Activated CD8-positive, alpha-beta memory T cell treated with anti-CD3 and anti-CD28 coated beads, Interleukin-2, amount 10 ng/mL, durations not matched to agents 7 days and 5 days (primary cell): ENCODE measurements at regions of chr18 and their contacts with region 1.

Region 1: GRCh38 chr18:63439334-63439733 is 17.1 kb upstream of the VPS4B start:
- DNase-seq: peak; percentile 55
- ATAC-seq: peak; percentile 60
- H3K4me3 Mint-ChIP-seq: no peak overlapping the region
- H3K27ac Mint-ChIP-seq: no peak overlapping the region
- H3K4me1 Mint-ChIP-seq: peaks cover 4% of the 10 kb centered on the region
- H3K27me3 Mint-ChIP-seq: peaks cover 46% of the 10 kb centered on the region

Region 2: DNA sequence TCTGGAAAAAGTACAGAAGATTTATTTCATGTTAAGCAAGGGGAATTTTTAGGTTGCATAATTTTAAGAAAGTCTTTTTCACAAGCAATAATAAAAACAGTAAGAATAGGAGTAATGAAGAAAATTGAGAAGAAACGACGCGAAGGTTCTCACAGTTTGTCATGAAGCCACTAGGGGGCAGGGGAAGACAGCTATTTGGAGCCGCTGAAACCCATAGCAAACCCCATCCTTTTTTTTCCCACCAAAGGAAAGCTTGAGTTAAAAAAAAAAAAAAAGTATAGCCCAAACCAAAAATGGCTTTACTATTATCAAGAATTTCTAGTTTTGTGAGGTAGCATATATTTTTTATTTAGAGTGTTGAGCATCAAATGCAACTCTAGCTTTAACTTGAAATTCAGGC is 423.1 kb before region 1 on chr18:
- CTCF ChIA-PET with region 1: interaction called, 44 read pairs
- DNase-seq: peak; percentile 52
- ATAC-seq: peak; percentile 60
- H3K4me3 Mint-ChIP-seq: no peak overlapping the region
- H3K27ac Mint-ChIP-seq: no peak overlapping the region
- H3K4me1 Mint-ChIP-seq: no peaks in the 10 kb centered on the region
- H3K27me3 Mint-ChIP-seq: peaks cover 61% of the 10 kb centered on the region

Region 3: GRCh38 chr18:63325086-63325686 is 114.1 kb before region 1 on chr18:
- CTCF ChIA-PET with region 1: interaction called, 33 read pairs
- DNase-seq: no peak
- ATAC-seq: no peak
- H3K4me3 Mint-ChIP-seq: no peak overlapping the region
- H3K27ac Mint-ChIP-seq: no peak overlapping the region
- H3K4me1 Mint-ChIP-seq: peaks cover 18% of the 10 kb centered on the region
- H3K27me3 Mint-ChIP-seq: no peaks in the 10 kb centered on the region

Region 4: GRCh38 chr18:63339920-63340484 is 99.3 kb before region 1 on chr18:
- CTCF ChIA-PET with region 1: interaction called, 79 read pairs
- DNase-seq: peak; percentile 51
- ATAC-seq: peak; percentile 39
- H3K4me3 Mint-ChIP-seq: no peak overlapping the region
- H3K27ac Mint-ChIP-seq: peak overlapping the region; percentile 47
- H3K4me1 Mint-ChIP-seq: peaks cover 6% of the 10 kb centered on the region
- H3K27me3 Mint-ChIP-seq: no peaks in the 10 kb centered on the region

Region 5: GRCh38 chr18:63366213-63367052 is 72.9 kb before region 1 on chr18:
- CTCF ChIA-PET with region 1: interaction called, 22 read pairs
- DNase-seq: peak; percentile 86
- ATAC-seq: peak; percentile 60
- H3K4me3 Mint-ChIP-seq: peak overlapping the region; percentile 85
- H3K27ac Mint-ChIP-seq: peak overlapping the region; percentile 77
- H3K4me1 Mint-ChIP-seq: peaks cover 39% of the 10 kb centered on the region
- H3K27me3 Mint-ChIP-seq: no peaks in the 10 kb centered on the region

Region 6: GRCh38 chr18:63422087-63422809 is 17.1 kb before region 1 on chr18 and contains the start of gene VPS4B:
- CTCF ChIA-PET with region 1: interaction called, 19 read pairs
- DNase-seq: peak; percentile 100
- ATAC-seq: peak; percentile 95
- H3K4me3 Mint-ChIP-seq: peak within 1 kb of the TSS; percentile 99
- H3K27ac Mint-ChIP-seq: peak within 1 kb of the TSS; percentile 99
- H3K4me1 Mint-ChIP-seq: peaks cover 30% of the 10 kb centered on the region
- H3K27me3 Mint-ChIP-seq: peaks cover 2% of the 10 kb centered on the region
- total RNA-seq, gene VPS4B: 63.3 to 64.8 TPM

Region 7: DNA sequence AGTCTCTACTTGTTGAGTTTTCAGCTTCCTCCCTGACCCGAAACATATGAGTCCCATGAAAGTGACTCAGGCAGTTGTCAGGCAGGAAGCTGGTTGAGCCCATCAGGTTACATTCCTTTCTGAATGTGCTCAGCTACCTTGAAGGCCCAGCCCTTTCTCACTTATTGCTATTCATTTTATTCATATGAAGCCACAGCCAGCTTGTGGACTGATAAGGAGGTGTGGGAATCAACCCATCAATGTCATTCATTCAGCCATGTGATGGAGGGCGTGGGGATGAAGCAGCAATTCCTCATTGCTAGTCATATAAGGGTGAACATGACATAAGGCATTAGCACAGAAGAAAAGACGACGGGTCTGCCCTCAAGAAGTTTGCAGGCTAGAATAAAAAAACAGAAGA is 11.8 kb before region 1 on chr18:
- CTCF ChIA-PET with region 1: interaction called, 19 read pairs
- DNase-seq: no peak
- ATAC-seq: no peak
- H3K4me3 Mint-ChIP-seq: no peak overlapping the region
- H3K27ac Mint-ChIP-seq: no peak overlapping the region
- H3K4me1 Mint-ChIP-seq: peaks cover 15% of the 10 kb centered on the region
- H3K27me3 Mint-ChIP-seq: peaks cover 29% of the 10 kb centered on the region